Activated CD8-positive, alpha-beta memory T cell treated with anti-CD3 and anti-CD28 coated beads, Interleukin-2, amount 10 ng/mL, durations not matched to agents 7 days and 5 days (primary cell): ENCODE measurements at regions of chr1 and their contacts with region 1.

Region 1: GRCh38 chr1:26138974-26139558 is 19.8 kb upstream of the FAM110D start:
- DNase-seq: no peak
- ATAC-seq: peak; percentile 45
- H3K4me3 Mint-ChIP-seq: no peak overlapping the region
- H3K27ac Mint-ChIP-seq: no peak overlapping the region
- H3K4me1 Mint-ChIP-seq: peaks cover 10% of the 10 kb centered on the region
- H3K27me3 Mint-ChIP-seq: peaks cover 5% of the 10 kb centered on the region

Region 2: DNA sequence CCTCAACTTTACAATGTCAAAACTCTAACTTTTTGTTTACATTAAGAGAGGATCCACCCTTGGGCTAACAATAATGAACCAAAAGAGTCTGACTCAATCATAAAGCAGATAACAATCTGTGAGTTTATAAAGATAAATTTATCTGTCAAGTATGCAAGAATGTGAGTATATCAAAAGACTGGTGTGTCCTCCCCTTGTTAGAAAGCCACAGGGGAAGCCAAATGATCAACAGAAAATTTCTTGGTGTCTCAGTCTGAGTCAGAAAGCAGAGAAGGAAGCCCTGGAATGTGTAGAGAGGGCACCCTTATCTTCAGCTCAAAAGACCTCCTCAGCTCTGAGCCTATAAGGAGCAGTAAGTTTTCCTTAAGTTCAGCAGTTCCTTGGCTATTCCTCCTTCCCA is 41.4 kb before region 1 on chr1:
- CTCF ChIA-PET with region 1: interaction called, 181 read pairs
- DNase-seq: peak; percentile 45
- ATAC-seq: peak; percentile 85
- H3K4me3 Mint-ChIP-seq: no peak overlapping the region
- H3K27ac Mint-ChIP-seq: no peak overlapping the region
- H3K4me1 Mint-ChIP-seq: peaks cover 17% of the 10 kb centered on the region
- H3K27me3 Mint-ChIP-seq: peaks cover 43% of the 10 kb centered on the region

Region 3: GRCh38 chr1:26111530-26112406 is 27.3 kb before region 1 on chr1 and contains the start of gene PDIK1L:
- CTCF ChIA-PET with region 1: interaction called, 93 read pairs
- DNase-seq: peak; percentile 94
- ATAC-seq: peak; percentile 87
- H3K4me3 Mint-ChIP-seq: peak within 1 kb of the TSS; percentile 91
- H3K27ac Mint-ChIP-seq: peak within 1 kb of the TSS; percentile 94
- H3K4me1 Mint-ChIP-seq: peaks cover 30% of the 10 kb centered on the region
- H3K27me3 Mint-ChIP-seq: no peaks in the 10 kb centered on the region
- total RNA-seq, gene PDIK1L: 18.3 to 20.2 TPM

Region 4: GRCh38 chr1:26126321-26127084 is 12.6 kb before region 1 on chr1:
- CTCF ChIA-PET with region 1: interaction called, 69 read pairs
- DNase-seq: peak; percentile 79
- ATAC-seq: peak; percentile 94
- H3K4me3 Mint-ChIP-seq: peak overlapping the region; percentile 74
- H3K27ac Mint-ChIP-seq: peak overlapping the region; percentile 94
- H3K4me1 Mint-ChIP-seq: peaks cover 57% of the 10 kb centered on the region
- H3K27me3 Mint-ChIP-seq: peaks cover 5% of the 10 kb centered on the region

Region 5: DNA sequence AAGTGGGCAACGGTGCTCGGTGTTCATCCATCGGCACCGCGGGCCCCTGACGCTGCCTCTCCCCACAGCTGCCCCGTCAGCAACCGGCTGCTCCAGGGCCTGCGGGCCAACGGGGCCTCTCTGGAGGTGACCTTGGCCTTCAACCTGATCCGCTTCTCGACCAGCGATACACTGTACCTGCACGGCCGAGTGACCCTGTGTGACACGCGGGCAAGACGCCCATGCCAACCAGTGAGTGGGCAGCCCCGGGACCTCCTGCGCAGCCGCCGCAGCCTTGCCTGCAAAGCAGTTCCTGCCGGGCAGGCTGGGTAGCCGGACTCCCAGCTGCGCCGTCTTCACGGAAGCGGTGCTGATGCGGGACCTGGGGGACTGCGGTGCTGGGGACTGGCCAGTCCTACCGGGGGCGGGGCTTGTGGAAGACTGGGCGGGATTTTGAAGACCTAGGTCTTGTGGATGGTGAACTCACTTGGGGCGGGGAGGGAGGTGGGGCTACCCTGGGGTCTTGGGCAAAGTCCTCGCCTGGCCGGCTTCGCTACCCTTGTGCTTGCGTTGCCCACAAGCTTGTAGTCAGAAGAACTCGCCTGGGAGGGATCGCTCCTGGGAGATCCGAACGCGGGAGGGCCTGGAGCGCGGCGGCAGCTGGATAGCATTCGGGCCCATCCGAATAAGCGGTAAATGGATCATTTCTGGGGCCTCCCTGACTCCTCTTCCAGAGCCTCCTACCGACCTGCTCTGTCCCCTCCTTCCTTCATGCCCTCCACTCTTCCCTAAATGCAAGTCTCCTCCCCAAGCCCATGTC is 86.2 kb after region 1 on chr1:
- CTCF ChIA-PET with region 1: no interaction called
- DNase-seq: peak; percentile 71
- ATAC-seq: peak; percentile 92
- H3K4me3 Mint-ChIP-seq: peak overlapping the region; percentile 51
- H3K27ac Mint-ChIP-seq: no peak overlapping the region
- H3K4me1 Mint-ChIP-seq: peaks cover 13% of the 10 kb centered on the region
- H3K27me3 Mint-ChIP-seq: peaks cover 45% of the 10 kb centered on the region